Activated CD8-positive, alpha-beta memory T cell treated with anti-CD3 and anti-CD28 coated beads, Interleukin-2, amount 10 ng/mL, durations not matched to agents 7 days and 5 days (primary cell): ENCODE measurements at regions of chr11 and their contacts with region 1.

Region 1: DNA sequence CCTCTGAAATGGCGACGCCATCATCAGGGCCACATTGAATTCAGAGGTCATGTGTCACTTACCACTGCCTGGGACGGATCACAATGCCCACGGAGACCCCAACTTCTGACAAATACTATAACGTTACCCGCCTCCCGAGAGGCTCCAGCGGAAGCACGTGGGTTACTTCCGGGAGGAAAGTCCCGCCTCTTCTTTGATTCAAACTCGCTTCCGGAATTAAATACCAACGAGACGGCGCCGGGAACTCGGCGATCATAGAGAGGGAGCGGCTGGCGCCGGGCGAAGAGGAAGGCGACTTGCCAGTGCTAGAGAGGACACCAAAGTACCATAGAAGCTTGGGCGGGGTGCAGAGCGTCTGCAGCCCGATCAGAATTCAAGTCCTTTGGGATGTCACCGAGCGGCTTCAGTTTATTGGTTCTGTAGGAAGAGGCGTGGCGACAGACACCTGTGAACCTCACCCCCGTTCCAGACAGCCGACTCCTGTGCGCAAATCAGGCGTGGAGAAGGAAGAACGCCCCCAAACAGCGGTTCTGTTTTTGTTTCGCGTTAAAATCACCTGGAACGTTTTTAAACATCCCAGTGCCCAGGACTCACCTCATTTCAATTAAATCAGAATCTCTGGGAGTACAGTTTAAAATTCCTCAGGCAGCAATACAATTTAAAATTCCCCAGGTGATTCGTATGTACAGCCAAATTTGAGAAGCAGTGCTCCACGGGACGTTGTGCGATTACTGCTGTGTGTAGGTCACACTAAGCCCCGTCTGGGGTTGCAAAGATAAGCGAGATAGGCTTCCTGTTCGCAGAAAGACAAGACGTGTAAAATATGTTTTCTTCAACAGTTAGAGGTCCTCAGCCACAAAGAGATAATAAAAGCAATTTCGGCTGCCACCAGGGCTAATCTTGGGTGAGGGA is at the start of gene TIMM10:
- DNase-seq: peak; percentile 97
- ATAC-seq: peak; percentile 97
- H3K4me3 Mint-ChIP-seq: peak within 1 kb of the TSS; percentile 77
- H3K27ac Mint-ChIP-seq: peak within 1 kb of the TSS; percentile 79
- H3K4me1 Mint-ChIP-seq: peaks cover 41% of the 10 kb centered on the region
- H3K27me3 Mint-ChIP-seq: no peaks in the 10 kb centered on the region
- total RNA-seq, gene TIMM10: 74.5 to 92.9 TPM

Region 2: GRCh38 chr11:57219021-57219627 is 311.7 kb before region 1 on chr11:
- CTCF ChIA-PET with region 1: no interaction called
- DNase-seq: no peak
- ATAC-seq: no peak
- H3K4me3 Mint-ChIP-seq: no peak overlapping the region
- H3K27ac Mint-ChIP-seq: no peak overlapping the region
- H3K4me1 Mint-ChIP-seq: no peaks in the 10 kb centered on the region
- H3K27me3 Mint-ChIP-seq: peaks cover 4% of the 10 kb centered on the region

Region 3: DNA sequence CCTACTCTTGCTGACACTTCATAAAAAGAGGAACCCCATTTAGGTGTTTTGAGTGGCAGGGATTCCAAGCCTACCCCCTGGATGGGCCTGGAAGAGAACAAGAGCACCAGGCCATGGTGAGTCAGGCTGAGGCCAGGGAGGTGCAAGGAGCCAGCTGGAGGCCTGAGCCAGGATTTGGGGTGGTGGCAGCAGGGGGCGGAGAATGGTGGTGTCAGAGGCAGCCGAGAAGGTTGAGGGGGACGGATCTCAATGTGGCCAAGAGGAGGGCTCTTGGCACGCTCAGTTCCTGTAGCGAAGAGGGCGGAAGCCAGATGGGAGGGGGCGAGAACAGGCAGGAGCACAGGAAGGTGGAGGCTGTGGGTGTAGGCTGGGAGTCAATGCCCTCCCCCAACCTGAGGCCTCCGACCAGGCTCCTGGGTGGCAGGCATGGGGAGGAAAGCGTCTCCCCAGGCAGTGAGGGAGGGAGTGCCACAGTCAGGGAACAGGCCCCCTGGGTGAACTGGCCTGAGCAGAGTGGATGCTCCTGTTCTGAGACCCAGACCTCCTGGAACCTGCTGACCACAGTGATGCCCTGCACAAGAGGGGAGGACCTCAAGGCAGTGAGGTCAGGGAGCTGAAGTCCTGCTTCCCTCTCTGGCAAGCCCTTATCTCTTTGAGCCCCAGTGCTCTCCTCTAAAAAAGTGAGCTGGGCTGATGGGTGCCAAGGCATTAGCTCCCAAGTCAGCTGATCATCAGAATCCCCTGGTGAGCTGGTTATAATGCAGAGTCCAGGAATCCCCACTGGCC is 56.6 kb before region 1 on chr11:
- CTCF ChIA-PET with region 1: interaction called, 79 read pairs
- DNase-seq: peak; percentile 78
- ATAC-seq: peak; percentile 78
- H3K4me3 Mint-ChIP-seq: no peak overlapping the region
- H3K27ac Mint-ChIP-seq: peak overlapping the region; percentile 14
- H3K4me1 Mint-ChIP-seq: peaks cover 29% of the 10 kb centered on the region
- H3K27me3 Mint-ChIP-seq: peaks cover 30% of the 10 kb centered on the region

Region 4: GRCh38 chr11:57499413-57499982 is 31.4 kb before region 1 on chr11:
- CTCF ChIA-PET with region 1: interaction called, 247 read pairs
- DNase-seq: no peak
- ATAC-seq: peak; percentile 54
- H3K4me3 Mint-ChIP-seq: no peak overlapping the region
- H3K27ac Mint-ChIP-seq: no peak overlapping the region
- H3K4me1 Mint-ChIP-seq: no peaks in the 10 kb centered on the region
- H3K27me3 Mint-ChIP-seq: no peaks in the 10 kb centered on the region

Region 5: DNA sequence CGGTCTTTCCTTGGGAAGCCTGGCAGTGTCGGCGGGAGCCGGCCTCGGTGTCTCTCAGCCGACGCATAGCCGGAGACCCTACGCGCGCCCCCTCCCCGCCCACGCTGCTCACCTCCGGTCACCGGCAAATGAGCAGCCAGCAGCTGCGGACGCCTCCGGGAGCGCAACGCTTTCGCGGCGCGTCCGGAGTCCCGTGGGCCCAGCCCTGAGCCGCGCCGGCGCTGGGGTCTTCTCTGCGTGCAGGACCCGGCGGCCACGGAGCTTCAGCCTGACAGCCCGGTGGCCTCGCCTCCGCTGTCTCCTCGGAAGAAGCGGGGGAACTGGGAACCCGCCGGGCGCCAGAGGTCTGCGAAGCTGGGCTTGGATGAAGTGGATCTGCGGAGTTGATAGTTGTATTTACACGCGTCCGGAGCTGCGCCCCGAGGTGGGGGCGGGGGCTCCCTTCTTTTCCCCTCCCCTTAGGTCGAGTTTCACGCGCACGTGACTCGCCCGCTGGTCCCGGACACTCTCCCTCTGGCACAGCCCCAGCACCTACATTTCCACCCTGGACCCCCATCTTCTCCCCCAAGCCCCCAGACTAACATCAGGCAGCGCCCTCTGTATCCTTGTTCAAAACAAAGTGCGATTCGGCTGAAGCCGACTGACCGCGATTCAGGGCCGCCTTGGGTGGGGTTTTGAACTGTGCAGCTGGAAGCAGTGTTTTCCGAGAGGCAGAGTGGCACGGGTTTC is 15.4 kb before region 1 on chr11 and contains the start of gene SLC43A1:
- CTCF ChIA-PET with region 1: interaction called, 107 read pairs
- DNase-seq: peak; percentile 61
- ATAC-seq: peak; percentile 63
- H3K4me3 Mint-ChIP-seq: peak within 1 kb of the TSS; percentile 96
- H3K27ac Mint-ChIP-seq: peak within 1 kb of the TSS; percentile 89
- H3K4me1 Mint-ChIP-seq: peaks cover 30% of the 10 kb centered on the region
- H3K27me3 Mint-ChIP-seq: no peaks in the 10 kb centered on the region
- total RNA-seq, gene SLC43A1: 24.6 to 25.8 TPM